ENCODE measurements at regions of chr22 and their contacts with region 1.

Region 1: DNA sequence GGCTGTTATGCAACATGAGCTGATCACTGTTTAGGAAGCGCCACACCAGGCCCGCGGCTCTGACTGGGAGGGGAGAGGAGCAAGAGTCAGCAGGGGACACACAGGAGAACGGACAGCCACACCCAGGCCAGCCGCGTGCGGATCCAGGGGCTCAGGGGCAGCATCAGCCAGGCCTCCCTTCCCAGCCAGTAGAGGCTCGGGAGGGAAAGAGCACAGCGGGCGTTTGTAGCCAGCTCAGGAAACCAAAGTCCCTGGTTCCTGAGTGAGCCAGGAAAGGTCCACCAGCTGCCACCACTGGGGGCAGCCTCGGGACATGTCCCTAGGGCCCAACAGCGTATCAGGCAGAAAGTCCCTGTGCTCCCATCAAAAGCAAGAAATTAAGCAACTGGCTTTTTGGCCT is 71.8 kb upstream of the PITPNB start:
- DNase-seq: peak; percentile 92

Region 2: GRCh38 chr22:27391092-27391770 is 599.6 kb before region 1 on chr22:
- intact Hi-C with region 1: loop called in 1 of 2 experiments (anchors 5 kb)
- DNase-seq: peak; percentile 86

Region 3: DNA sequence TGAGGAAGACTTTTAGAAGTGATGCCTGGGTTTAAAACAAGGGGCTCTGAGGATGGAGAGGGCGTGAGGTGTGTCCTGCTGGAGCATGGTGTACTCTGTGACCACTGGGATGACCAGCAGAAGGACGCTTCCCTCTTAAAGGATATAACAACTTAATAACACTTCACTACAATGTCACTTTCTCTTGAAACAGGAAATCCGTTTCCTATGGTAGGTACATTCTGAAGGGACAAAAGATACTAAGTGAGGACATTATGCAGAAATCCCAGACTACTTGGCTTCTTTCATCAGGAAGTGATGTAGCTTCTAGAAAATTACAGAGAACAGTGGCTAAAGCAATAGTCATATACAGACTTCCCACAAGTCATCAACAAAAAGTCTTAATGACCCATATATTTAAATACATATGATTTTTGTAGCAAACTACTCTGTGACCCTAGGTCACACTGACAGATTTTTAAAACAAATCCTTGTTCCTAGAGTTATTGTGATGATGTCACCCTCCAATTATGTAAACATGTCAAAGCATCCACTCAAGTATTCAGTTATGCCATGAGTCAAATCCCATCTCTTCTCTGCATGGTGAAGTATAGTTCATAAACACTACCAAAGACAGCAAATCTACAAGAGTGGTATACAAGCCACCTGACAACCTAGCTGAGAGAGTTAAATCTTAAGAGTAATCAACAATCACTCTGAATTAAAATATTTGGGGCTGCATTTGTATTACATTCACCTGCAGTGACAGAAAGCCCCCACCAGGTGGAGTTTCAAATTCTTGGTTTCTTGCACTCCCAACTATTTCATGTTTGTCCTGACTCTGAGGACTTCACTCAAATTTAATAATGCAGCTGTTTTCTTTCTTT is 104.7 kb before region 1 on chr22:
- intact Hi-C with region 1: loop called in 1 of 2 experiments (anchors 5 kb)
- DNase-seq: no peak